CD8-positive, alpha-beta T cell (primary cell): ENCODE measurements at regions of chr10 and their contacts with region 1.

Region 1: DNA sequence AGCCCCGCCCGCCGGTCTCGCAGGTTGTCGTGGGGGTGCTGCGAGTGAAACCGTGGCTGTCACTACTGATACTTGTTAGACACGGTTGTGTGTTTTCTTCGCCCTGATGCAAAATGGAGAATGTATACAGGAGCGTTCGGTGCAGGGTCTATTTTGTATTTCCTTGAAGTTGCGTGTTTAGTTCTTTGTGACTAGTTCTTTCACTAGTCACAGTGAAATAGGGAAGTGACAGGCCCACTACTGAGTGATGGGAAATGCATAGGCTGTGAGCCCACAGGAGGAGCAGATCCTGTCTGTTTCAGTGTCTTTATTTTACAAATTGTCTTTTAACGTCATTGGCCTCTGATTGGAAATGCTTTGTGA is 675 bp downstream of the ABRAXAS2 start:
- DNase-seq: peak in 3 of 9 experiments; percentile 5 to 38 (median 19)
- ATAC-seq: no peak
- H3K4me3 ChIP-seq: peak overlapping the region; percentile 73 to 90
- H3K4me3 Mint-ChIP-seq: peak overlapping the region; percentile 94
- H3K27ac ChIP-seq: peak overlapping the region; percentile 36 to 76
- H3K27ac Mint-ChIP-seq: peak overlapping the region; percentile 91
- H3K4me1 ChIP-seq: peaks cover 12% of the 10 kb centered on the region
- H3K4me1 Mint-ChIP-seq: peaks cover 25% of the 10 kb centered on the region
- H3K27me3 ChIP-seq: no peaks in the 10 kb centered on the region
- H3K27me3 Mint-ChIP-seq: peaks cover 2% of the 10 kb centered on the region
- CTCF ChIP-seq: no peak

Region 2: GRCh38 chr10:124461438-124462347 is 340.6 kb before region 1 on chr10 and contains the start of gene LHPP:
- CTCF ChIA-PET with region 1: no interaction called
- POLR2A ChIA-PET with region 1: no interaction called
- intact Hi-C with region 1: loop called (anchors 2 kb)
- DNase-seq: peak; percentile 72 to 93 (median 86)
- ATAC-seq: peak; percentile 94
- H3K4me3 ChIP-seq: peak within 1 kb of the TSS; percentile 61 to 90
- H3K4me3 Mint-ChIP-seq: peak within 1 kb of the TSS; percentile 91
- H3K27ac ChIP-seq: peak within 1 kb of the TSS; percentile 37 to 79
- H3K27ac Mint-ChIP-seq: peak within 1 kb of the TSS; percentile 95
- H3K4me1 ChIP-seq: peaks cover 25% of the 10 kb centered on the region
- H3K4me1 Mint-ChIP-seq: peaks cover 32% of the 10 kb centered on the region
- H3K27me3 ChIP-seq: peaks cover 0 to under 1% of the 10 kb centered on the region in 2 experiments
- H3K27me3 Mint-ChIP-seq: peaks cover 4% of the 10 kb centered on the region
- CTCF ChIP-seq: peak; percentile 39
- total RNA-seq, gene LHPP: 14.4 to 17.3 TPM

Region 3: DNA sequence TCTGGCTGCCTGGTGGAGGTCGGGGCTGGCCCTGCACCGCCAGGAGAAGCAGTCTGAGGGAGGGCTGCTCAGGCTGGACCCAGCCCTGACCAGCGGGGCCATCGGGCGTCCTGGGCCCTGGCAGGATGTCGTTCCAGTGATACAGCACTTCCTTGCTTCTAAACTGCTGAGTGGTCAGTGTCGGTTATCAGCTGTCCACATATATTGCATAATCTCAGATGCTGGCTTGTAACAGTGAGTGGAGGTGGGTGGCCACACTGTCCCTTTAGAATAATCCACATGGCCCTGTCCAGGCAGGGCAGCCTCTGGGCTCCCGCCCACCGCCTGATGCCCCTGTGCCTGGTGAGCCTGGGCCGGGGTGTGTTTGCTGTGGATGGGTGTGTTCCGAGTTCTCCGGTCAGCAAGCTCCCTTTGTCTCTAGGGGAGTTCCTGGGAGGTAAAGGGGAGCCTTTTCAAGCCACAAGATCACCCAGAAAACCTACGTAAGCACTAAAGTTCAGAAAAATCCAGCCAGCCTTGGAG is 254.6 kb before region 1 on chr10:
- CTCF ChIA-PET with region 1: no interaction called
- POLR2A ChIA-PET with region 1: no interaction called
- intact Hi-C with region 1: no loop called
- DNase-seq: no peak
- ATAC-seq: no peak
- H3K4me3 ChIP-seq: no peak overlapping the region
- H3K4me3 Mint-ChIP-seq: no peak overlapping the region
- H3K27ac ChIP-seq: no peak overlapping the region
- H3K27ac Mint-ChIP-seq: no peak overlapping the region
- H3K4me1 ChIP-seq: peaks cover 18% of the 10 kb centered on the region
- H3K4me1 Mint-ChIP-seq: peaks cover 19% of the 10 kb centered on the region
- H3K27me3 ChIP-seq: no peaks in the 10 kb centered on the region
- H3K27me3 Mint-ChIP-seq: no peaks in the 10 kb centered on the region
- CTCF ChIP-seq: no peak

Region 4: DNA sequence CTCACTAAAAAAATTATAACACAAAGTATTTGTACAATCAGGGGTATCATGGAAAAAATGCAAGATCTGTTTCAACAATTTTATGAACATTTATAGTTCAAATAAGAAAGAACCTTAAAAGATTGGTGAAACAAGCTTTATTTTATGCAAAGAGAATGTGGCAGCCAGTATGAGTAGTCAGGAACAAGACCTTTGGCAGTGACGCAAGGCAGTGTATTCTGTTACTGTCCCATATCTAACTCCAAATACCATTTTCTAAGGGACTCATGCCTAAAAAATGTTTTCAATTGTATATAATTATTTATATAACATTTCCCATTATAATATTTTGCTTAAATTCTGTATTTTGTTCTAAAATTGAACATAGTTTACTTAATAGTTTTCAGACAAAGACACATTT is 39.0 kb before region 1 on chr10:
- CTCF ChIA-PET with region 1: no interaction called
- POLR2A ChIA-PET with region 1: no interaction called
- intact Hi-C with region 1: no loop called
- DNase-seq: no peak
- ATAC-seq: no peak
- H3K4me3 ChIP-seq: no peak overlapping the region
- H3K4me3 Mint-ChIP-seq: no peak overlapping the region
- H3K27ac ChIP-seq: no peak overlapping the region
- H3K27ac Mint-ChIP-seq: no peak overlapping the region
- H3K4me1 ChIP-seq: no peaks in the 10 kb centered on the region
- H3K4me1 Mint-ChIP-seq: peaks cover 2% of the 10 kb centered on the region
- H3K27me3 ChIP-seq: no peaks in the 10 kb centered on the region
- H3K27me3 Mint-ChIP-seq: no peaks in the 10 kb centered on the region
- CTCF ChIP-seq: no peak

Region 5: GRCh38 chr10:124791378-124792348 is 10.6 kb before region 1 on chr10 and contains the start of gene EEF1AKMT2:
- CTCF ChIA-PET with region 1: no interaction called
- POLR2A ChIA-PET with region 1: interaction called, 14 read pairs
- intact Hi-C with region 1: loop called (anchors 1 kb)
- DNase-seq: peak; percentile 72 to 90 (median 80)
- ATAC-seq: peak; percentile 94
- H3K4me3 ChIP-seq: peak within 1 kb of the TSS; percentile 75 to 93
- H3K4me3 Mint-ChIP-seq: peak within 1 kb of the TSS; percentile 98
- H3K27ac ChIP-seq: peak within 1 kb of the TSS; percentile 62 to 86
- H3K27ac Mint-ChIP-seq: peak within 1 kb of the TSS; percentile 96
- H3K4me1 ChIP-seq: peaks cover 11% of the 10 kb centered on the region
- H3K4me1 Mint-ChIP-seq: peaks cover 24% of the 10 kb centered on the region
- H3K27me3 ChIP-seq: no peaks in the 10 kb centered on the region
- H3K27me3 Mint-ChIP-seq: no peaks in the 10 kb centered on the region
- CTCF ChIP-seq: no peak
- total RNA-seq, gene EEF1AKMT2: 13.8 to 13.9 TPM

Region 6: DNA sequence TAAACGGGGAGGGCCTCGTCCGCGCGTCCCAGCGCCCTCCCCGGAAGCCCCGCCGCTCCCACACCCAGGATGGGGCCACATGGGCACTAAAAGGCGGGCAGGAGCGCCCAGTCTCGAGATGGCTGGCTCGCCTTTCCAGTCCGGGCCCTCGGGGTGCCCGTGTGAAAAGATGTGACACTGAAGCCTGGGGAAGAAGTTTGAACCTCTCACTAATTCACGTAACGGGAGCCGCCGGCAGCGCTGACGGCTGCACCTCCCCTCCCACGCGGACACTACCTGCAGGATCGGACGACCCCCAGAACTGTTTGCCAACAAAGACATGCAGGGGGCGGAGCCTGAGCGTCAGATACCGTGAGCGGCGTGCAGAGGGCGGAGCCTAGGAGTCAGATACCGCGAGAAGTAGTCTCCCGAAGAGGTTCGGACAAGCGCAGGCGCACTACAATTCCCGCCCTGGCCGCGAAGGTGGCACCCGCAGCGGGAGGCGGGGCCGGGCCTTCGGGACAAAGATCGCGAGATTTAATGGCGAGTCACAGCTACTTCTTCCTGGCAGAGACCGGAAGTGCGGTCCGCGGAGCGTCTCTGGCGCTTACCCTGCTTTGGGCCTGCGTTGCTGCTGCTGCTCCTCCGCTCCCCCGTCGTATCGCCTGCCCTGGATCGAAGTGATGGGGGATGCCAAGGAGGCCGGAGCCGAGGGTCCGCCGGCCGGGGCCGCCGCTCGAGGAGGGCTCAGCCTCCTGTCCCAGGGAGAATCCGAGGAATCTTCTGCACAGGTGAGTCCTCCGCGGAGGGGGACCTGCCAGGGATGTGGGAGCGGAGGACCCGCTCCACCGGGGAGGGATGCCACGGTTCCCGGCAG is 917.1 kb after region 1 on chr10 and contains the start of gene EDRF1:
- CTCF ChIA-PET with region 1: no interaction called
- POLR2A ChIA-PET with region 1: no interaction called
- intact Hi-C with region 1: loop called in 1 of 2 experiments (anchors 5 kb)
- DNase-seq: peak; percentile 98 to 100 (median 99)
- ATAC-seq: peak; percentile 94
- H3K4me3 ChIP-seq: peak within 1 kb of the TSS; percentile 78 to 93
- H3K4me3 Mint-ChIP-seq: peak within 1 kb of the TSS; percentile 99
- H3K27ac ChIP-seq: peak within 1 kb of the TSS; percentile 91 to 94
- H3K27ac Mint-ChIP-seq: peak within 1 kb of the TSS; percentile 99
- H3K4me1 ChIP-seq: peaks cover 39% of the 10 kb centered on the region
- H3K4me1 Mint-ChIP-seq: peaks cover 36% of the 10 kb centered on the region
- H3K27me3 ChIP-seq: no peaks in the 10 kb centered on the region
- H3K27me3 Mint-ChIP-seq: no peaks in the 10 kb centered on the region
- CTCF ChIP-seq: no peak
- total RNA-seq, gene EDRF1: 46.9 to 49.0 TPM

Region 7: DNA sequence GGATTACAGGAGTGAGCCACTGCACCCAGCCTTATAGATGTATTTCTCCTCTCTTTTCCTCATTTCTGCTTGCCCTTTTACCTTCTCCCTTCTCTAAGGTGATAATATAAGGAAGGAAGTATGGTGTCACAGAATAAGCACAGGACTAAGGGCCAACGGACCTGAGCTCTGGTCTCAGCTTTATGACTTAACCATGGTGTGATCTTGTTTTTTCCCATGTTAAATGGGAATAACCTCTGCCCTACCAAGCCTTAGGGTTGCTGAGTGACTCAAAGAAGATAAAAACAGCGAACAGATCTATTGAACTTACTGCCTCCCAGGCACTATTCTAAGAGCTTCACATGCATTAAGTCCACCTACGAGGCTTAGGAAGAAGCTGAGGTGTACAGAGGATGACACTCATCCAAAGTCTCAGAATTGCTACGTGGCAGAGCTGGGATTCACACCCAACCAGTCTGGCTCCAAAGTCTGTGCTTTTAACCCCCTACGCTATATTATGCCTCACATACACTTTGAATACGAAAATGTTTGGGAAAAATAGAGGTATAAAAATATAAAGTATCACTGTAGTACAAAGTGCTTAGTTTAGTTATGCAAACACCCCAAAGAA is 1015.1 kb after region 1 on chr10:
- CTCF ChIA-PET with region 1: no interaction called
- POLR2A ChIA-PET with region 1: no interaction called
- intact Hi-C with region 1: loop called in 1 of 2 experiments (anchors 5 kb)
- DNase-seq: no peak
- ATAC-seq: no peak
- H3K4me3 ChIP-seq: no peak overlapping the region
- H3K4me3 Mint-ChIP-seq: no peak overlapping the region
- H3K27ac ChIP-seq: no peak overlapping the region
- H3K27ac Mint-ChIP-seq: no peak overlapping the region
- H3K4me1 ChIP-seq: peaks cover 16% of the 10 kb centered on the region
- H3K4me1 Mint-ChIP-seq: peaks cover 25% of the 10 kb centered on the region
- H3K27me3 ChIP-seq: no peaks in the 10 kb centered on the region
- H3K27me3 Mint-ChIP-seq: no peaks in the 10 kb centered on the region
- CTCF ChIP-seq: no peak